ENCODE measurements at regions of chr17 and their contacts with region 1.

Region 1: GRCh38 chr17:47970704-47971463 is at the start of gene CDK5RAP3:
- DNase-seq: peak; percentile 100
- H3K4me3 Mint-ChIP-seq: peak within 1 kb of the TSS; percentile 95
- H3K27ac Mint-ChIP-seq: peak within 1 kb of the TSS; percentile 80
- H3K4me1 Mint-ChIP-seq: peaks cover 24% of the 10 kb centered on the region
- H3K27me3 Mint-ChIP-seq: no peaks in the 10 kb centered on the region
- total RNA-seq, gene CDK5RAP3: 174 to 175 TPM

Region 2: GRCh38 chr17:47831003-47831933 is 139.6 kb before region 1 on chr17 and contains the starts of genes LRRC46 and MRPL10:
- CTCF ChIA-PET with region 1: interaction called, 3 read pairs
- intact Hi-C with region 1: loop called (anchors 2 kb)
- DNase-seq: peak; percentile 93
- H3K4me3 Mint-ChIP-seq: peak within 1 kb of the TSS; percentile 89
- H3K27ac Mint-ChIP-seq: peak within 1 kb of the TSS; percentile 78
- H3K4me1 Mint-ChIP-seq: peaks cover 60% of the 10 kb centered on the region
- H3K27me3 Mint-ChIP-seq: no peaks in the 10 kb centered on the region
- total RNA-seq, gene LRRC46: 0.31 to 0.52 TPM
- total RNA-seq, gene MRPL10: 66.7 to 70.0 TPM

Region 3: DNA sequence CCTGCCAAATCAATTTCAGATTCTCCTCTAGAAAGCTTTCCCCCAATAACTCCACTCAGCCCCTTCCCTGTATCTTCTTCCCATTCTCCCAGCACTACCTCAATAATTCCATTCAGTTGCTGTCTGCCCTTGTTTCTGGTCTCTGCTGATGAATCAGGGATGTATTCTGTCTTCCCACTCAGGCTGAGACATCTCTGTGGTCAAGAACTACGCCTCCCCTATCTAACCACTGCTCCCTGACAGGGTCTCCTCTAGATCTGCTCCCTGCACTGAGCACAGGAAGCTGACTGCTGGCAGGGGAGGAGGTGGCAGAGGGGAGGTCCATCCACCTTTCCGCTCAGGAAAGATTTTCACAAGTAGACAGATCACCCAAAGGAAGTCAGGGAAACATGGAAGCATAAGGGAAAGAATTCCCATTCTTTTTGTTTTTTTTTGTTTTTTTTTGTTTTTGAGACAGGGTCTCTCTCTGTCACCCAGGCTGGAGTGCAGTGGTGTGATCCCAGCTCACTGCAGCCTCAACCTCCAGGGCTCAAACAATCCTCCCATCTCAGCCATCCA is 91.8 kb before region 1 on chr17:
- CTCF ChIA-PET with region 1: no interaction called
- intact Hi-C with region 1: no loop called
- DNase-seq: no peak
- H3K4me3 Mint-ChIP-seq: no peak overlapping the region
- H3K27ac Mint-ChIP-seq: no peak overlapping the region
- H3K4me1 Mint-ChIP-seq: peaks cover 19% of the 10 kb centered on the region
- H3K27me3 Mint-ChIP-seq: peaks cover 14% of the 10 kb centered on the region

Region 4: DNA sequence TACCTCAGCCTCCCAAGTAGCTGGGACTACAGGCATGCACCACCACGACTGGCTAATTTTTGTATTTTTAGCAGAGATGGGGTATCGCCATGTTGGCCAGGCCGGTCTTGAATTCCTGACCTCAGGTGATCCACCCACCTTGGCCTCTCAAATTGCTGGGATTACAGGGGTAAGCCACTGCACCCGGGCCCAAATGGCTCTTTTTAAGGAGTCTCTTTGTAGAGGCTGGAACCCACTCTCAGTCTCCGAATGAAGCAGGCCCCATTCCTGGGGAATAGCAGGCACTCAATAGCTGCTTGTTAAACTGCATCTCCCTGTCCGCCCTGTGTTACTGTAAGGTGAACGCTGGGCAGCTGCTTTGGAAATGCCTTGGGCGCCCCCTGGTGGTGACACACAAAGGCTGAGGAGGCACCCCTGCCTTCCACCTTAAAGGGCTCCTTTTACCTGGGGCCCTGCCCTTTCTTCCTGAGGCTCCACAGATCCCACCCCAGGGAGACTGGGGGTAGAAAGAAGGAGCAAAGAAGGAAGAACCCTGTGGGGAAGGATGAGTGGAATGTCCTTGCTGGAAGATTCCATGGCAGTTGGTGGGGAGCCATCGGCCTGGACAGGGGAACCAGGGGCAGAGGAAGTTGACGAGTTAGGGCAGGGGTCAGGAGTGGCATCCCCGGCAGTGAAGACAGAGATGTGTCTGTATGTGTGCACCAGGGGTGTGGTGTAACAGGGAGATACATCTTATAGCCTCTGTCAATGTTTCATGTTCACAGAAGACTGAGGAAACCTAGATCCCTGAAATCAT is 81.0 kb before region 1 on chr17:
- CTCF ChIA-PET with region 1: interaction called, 16 read pairs
- intact Hi-C with region 1: no loop called
- DNase-seq: peak; percentile 97
- H3K4me3 Mint-ChIP-seq: no peak overlapping the region
- H3K27ac Mint-ChIP-seq: no peak overlapping the region
- H3K4me1 Mint-ChIP-seq: peaks cover 24% of the 10 kb centered on the region
- H3K27me3 Mint-ChIP-seq: no peaks in the 10 kb centered on the region

Region 5: DNA sequence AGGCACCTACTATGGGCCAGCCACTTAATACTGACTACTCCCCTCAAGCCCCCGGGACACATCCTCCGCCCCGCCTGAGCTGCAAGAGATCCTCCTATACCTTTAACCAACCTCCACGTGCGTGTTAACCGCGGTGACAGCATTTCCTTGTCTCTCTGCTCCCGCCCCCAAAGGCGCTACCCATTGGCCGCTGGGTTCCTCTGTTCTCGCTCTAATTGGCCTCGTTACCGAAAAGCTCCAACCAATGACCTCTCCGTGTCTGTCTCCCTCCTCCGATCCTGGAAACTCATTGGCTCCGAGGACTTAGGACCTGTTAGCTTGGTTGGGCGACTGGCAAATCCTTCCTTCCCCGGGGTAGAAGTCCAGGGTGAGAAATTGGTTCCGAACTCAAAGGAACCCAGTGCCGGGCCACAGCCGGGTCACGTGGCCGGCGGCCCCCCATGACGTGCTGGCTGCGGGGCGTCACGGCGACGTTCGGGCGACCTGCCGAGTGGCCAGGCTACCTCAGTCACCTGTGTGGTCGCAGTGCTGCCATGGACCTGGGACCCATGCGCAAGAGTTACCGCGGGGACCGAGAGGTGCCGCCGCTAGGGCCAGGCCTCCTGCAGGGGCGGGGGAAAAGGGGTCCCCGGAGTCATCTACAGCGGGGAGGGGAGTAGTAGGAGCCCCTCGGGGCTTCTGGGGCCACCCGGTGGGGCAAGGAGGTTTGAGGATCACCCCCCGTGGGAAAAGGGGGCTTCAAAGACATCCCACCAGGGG is 29.5 kb before region 1 on chr17 and contains the start of gene PNPO:
- CTCF ChIA-PET with region 1: interaction called, 69 read pairs
- intact Hi-C with region 1: loop called (anchors 1 kb)
- DNase-seq: peak; percentile 98
- H3K4me3 Mint-ChIP-seq: peak within 1 kb of the TSS; percentile 85
- H3K27ac Mint-ChIP-seq: peak within 1 kb of the TSS; percentile 80
- H3K4me1 Mint-ChIP-seq: peaks cover 62% of the 10 kb centered on the region
- H3K27me3 Mint-ChIP-seq: no peaks in the 10 kb centered on the region
- total RNA-seq, gene PNPO: 35.5 to 37.0 TPM

Region 6: GRCh38 chr17:47949136-47949759 is 21.6 kb before region 1 on chr17:
- CTCF ChIA-PET with region 1: interaction called, 69 read pairs
- intact Hi-C with region 1: loop called (anchors 1 kb)
- DNase-seq: peak; percentile 88
- H3K4me3 Mint-ChIP-seq: peak overlapping the region; percentile 49
- H3K27ac Mint-ChIP-seq: peak overlapping the region; percentile 67
- H3K4me1 Mint-ChIP-seq: peaks cover 41% of the 10 kb centered on the region
- H3K27me3 Mint-ChIP-seq: no peaks in the 10 kb centered on the region

Region 7: GRCh38 chr17:48047741-48048383 is 77.0 kb after region 1 on chr17 and contains the start of gene NFE2L1:
- CTCF ChIA-PET with region 1: interaction called, 4 read pairs
- intact Hi-C with region 1: loop called (anchors 2 kb)
- DNase-seq: peak; percentile 100
- H3K4me3 Mint-ChIP-seq: peak within 1 kb of the TSS; percentile 99
- H3K27ac Mint-ChIP-seq: peak within 1 kb of the TSS; percentile 98
- H3K4me1 Mint-ChIP-seq: peaks cover 51% of the 10 kb centered on the region
- H3K27me3 Mint-ChIP-seq: no peaks in the 10 kb centered on the region
- total RNA-seq, gene NFE2L1: 95.2 to 102 TPM

Region 8: DNA sequence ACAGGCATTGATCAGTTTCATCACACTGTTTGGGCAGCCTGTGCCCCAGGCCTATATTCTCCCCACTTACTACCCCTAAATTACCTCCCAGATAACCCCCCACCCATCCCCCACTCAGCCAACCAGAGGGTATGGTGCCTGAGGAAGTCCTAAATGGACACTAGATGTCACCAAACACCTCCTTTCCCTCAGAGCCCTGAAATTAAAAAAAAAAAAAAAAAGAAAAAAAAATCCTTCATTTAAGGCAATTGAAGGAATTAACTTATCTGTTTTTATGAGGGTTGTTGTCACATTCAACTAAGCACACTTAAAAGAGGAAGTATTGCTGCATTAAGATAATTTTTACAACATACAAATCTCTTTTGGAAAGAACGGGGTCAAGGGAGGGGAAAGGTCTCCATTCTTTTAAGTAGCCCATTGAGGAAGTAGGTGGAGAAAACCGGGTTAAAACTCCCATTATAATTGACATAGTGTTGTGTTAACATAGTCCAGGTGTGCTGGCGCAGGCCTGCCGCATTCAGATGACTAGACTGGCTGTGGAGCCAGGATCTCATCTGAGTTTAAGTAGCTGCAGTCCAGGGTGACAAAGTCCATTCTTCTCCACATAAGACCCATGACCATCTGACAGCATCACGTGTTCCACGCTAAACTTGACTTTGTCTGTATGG is 182.9 kb after region 1 on chr17:
- CTCF ChIA-PET with region 1: no interaction called
- intact Hi-C with region 1: no loop called
- DNase-seq: peak; percentile 22
- H3K4me3 Mint-ChIP-seq: no peak overlapping the region
- H3K27ac Mint-ChIP-seq: no peak overlapping the region
- H3K4me1 Mint-ChIP-seq: no peaks in the 10 kb centered on the region
- H3K27me3 Mint-ChIP-seq: no peaks in the 10 kb centered on the region

Region 9: GRCh38 chr17:48299760-48300159 is 328.9 kb after region 1 on chr17:
- CTCF ChIA-PET with region 1: no interaction called
- intact Hi-C with region 1: no loop called
- DNase-seq: peak; percentile 18
- H3K4me3 Mint-ChIP-seq: no peak overlapping the region
- H3K27ac Mint-ChIP-seq: peak overlapping the region; percentile 13
- H3K4me1 Mint-ChIP-seq: peaks cover 63% of the 10 kb centered on the region
- H3K27me3 Mint-ChIP-seq: no peaks in the 10 kb centered on the region

Measured in activated naive CD4-positive, alpha-beta T cell treated with anti-CD3 and anti-CD28 coated beads for 36 hours (primary cell).